ENCODE measurements at regions of chr11 and their contacts with region 1.

Region 1: GRCh38 chr11:133134314-133135173 is 397.8 kb downstream of the OPCML start:
- DNase-seq: peak; percentile 85
- H3K4me3 Mint-ChIP-seq: no peak overlapping the region
- H3K27ac Mint-ChIP-seq: no peak overlapping the region
- H3K4me1 Mint-ChIP-seq: no peaks in the 10 kb centered on the region
- H3K27me3 Mint-ChIP-seq: no peaks in the 10 kb centered on the region

Region 2: GRCh38 chr11:132895340-132895739 is 239.2 kb before region 1 on chr11:
- intact Hi-C with region 1: no loop called
- DNase-seq: no peak
- H3K4me3 Mint-ChIP-seq: no peak overlapping the region
- H3K27ac Mint-ChIP-seq: no peak overlapping the region
- H3K4me1 Mint-ChIP-seq: no peaks in the 10 kb centered on the region
- H3K27me3 Mint-ChIP-seq: no peaks in the 10 kb centered on the region

Region 3: GRCh38 chr11:133096981-133097380 is 37.6 kb before region 1 on chr11:
- intact Hi-C with region 1: no loop called
- DNase-seq: no peak
- H3K4me3 Mint-ChIP-seq: no peak overlapping the region
- H3K27ac Mint-ChIP-seq: no peak overlapping the region
- H3K4me1 Mint-ChIP-seq: no peaks in the 10 kb centered on the region
- H3K27me3 Mint-ChIP-seq: no peaks in the 10 kb centered on the region

Region 4: DNA sequence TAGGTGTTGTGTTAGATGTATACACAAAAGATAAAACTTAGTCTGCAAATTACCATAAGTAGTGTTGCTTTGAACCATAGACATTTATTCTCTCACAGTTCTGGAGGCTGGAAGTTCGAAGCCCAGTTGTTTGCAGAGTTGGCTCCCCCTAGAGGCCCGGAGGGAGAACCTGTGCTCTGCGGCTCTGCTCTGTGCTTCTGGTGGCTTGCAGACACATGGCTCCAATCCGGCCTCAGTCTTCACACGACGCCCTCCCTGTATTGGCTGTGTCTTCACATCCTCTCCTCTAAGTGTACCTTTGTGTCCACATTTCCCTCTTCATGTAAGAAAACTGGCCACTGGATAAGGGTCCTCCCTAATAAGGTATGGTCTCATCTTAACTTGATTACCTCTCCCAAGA is 269.4 kb after region 1 on chr11:
- intact Hi-C with region 1: loop called (anchors 5 kb)
- DNase-seq: no peak
- H3K4me3 Mint-ChIP-seq: no peak overlapping the region
- H3K27ac Mint-ChIP-seq: no peak overlapping the region
- H3K4me1 Mint-ChIP-seq: no peaks in the 10 kb centered on the region
- H3K27me3 Mint-ChIP-seq: no peaks in the 10 kb centered on the region

Region 5: GRCh38 chr11:133834682-133835592 is 700.4 kb after region 1 on chr11:
- intact Hi-C with region 1: loop called (anchors 1 kb)
- DNase-seq: peak; percentile 89
- H3K4me3 Mint-ChIP-seq: no peak overlapping the region
- H3K27ac Mint-ChIP-seq: peak overlapping the region; percentile 55
- H3K4me1 Mint-ChIP-seq: peaks cover 4% of the 10 kb centered on the region
- H3K27me3 Mint-ChIP-seq: no peaks in the 10 kb centered on the region

Measured in activated CD4-positive, alpha-beta T cell treated with anti-CD3 and anti-CD28 coated beads, Interleukin-2, amount 10 ng/mL, durations not matched to agents 24 days and 14 days (primary cell).